H1 (cell line): ENCODE measurements at regions of chr22 and their contacts with region 1.

Region 1: GRCh38 chr22:39343259-39344048 is 6.3 kb upstream of the SYNGR1 start:
- DNase-seq: peak; percentile 34 to 76
- H3K4me3 ChIP-seq: peak overlapping the region in 1 of 4 experiments; percentile 3; a peak in 1 of 8 replicates
- H3K27ac ChIP-seq: no peak overlapping the region
- H3K4me1 ChIP-seq: peaks cover 2 to 3% (median 3%) of the 10 kb centered on the region in 4 experiments; a peak in 4 of 7 replicates
- H3K27me3 ChIP-seq: no peaks in the 10 kb centered on the region
- CTCF ChIP-seq: peak; percentile 74 to 94 (median 75)
- EP300 ChIP-seq: no peak
- POLR2A ChIP-seq: no peak
- RAD21 ChIP-seq: peak; percentile 63 to 74

Region 2: GRCh38 chr22:39144101-39144767 is 199.2 kb before region 1 on chr22:
- CTCF ChIA-PET with region 1: no interaction called
- POLR2A ChIA-PET with region 1: no interaction called
- DNase-seq: no peak
- H3K4me3 ChIP-seq: peak overlapping the region; percentile 87 to 99 (median 92); a peak in 6 of 8 replicates
- H3K27ac ChIP-seq: no peak overlapping the region
- H3K4me1 ChIP-seq: peaks cover 12 to 24% (median 19%) of the 10 kb centered on the region in 4 experiments
- H3K27me3 ChIP-seq: no peaks in the 10 kb centered on the region; a peak in 1 of 7 replicates
- CTCF ChIP-seq: no peak
- EP300 ChIP-seq: no peak
- POLR2A ChIP-seq: no peak
- RAD21 ChIP-seq: no peak

Region 3: GRCh38 chr22:39292561-39293098 is 50.8 kb before region 1 on chr22:
- CTCF ChIA-PET with region 1: no interaction called
- POLR2A ChIA-PET with region 1: no interaction called
- DNase-seq: peak in 1 of 2 experiments; percentile 62
- H3K4me3 ChIP-seq: no peak overlapping the region
- H3K27ac ChIP-seq: no peak overlapping the region
- H3K4me1 ChIP-seq: peaks cover 0 to 16% (median 7%) of the 10 kb centered on the region in 4 experiments; a peak in 6 of 7 replicates
- H3K27me3 ChIP-seq: no peaks in the 10 kb centered on the region; a peak in 1 of 7 replicates
- CTCF ChIP-seq: no peak
- EP300 ChIP-seq: no peak
- POLR2A ChIP-seq: no peak
- RAD21 ChIP-seq: no peak

Region 4: DNA sequence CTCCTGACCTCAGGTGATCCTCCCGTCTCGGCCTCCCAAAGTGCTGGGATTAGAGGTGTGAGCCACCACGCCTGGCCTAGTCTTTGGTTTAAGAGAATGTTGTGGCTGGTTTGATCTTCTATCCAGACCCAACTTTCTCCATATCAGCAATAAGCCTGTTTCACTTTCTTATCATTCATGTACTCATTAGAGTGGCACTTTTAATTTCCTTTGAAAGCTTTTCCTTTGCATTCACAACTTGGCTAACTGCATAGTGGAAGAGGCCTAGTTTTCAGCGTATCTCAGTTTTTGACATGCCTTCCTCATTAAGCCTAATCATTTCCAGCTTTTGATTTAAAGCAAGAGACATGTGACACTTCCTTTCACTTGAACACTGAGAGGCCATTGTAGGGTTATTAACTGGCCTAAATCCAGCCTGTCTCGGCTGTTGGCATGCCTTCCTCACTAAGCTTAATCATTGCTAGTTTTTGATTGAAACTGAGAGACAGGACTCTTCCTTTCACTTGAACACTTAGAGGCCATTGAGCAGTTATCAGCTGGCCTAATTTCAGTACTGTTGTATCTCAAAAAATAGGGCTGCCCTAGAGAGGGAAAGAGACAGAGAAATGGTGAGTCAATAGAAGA is 10.9 kb before region 1 on chr22:
- CTCF ChIA-PET with region 1: interaction called, 110 read pairs
- POLR2A ChIA-PET with region 1: interaction called, 4 read pairs
- DNase-seq: no peak
- H3K4me3 ChIP-seq: no peak overlapping the region
- H3K27ac ChIP-seq: no peak overlapping the region
- H3K4me1 ChIP-seq: no peaks in the 10 kb centered on the region
- H3K27me3 ChIP-seq: no peaks in the 10 kb centered on the region
- CTCF ChIP-seq: no peak
- EP300 ChIP-seq: no peak
- POLR2A ChIP-seq: no peak
- RAD21 ChIP-seq: no peak

Region 5: GRCh38 chr22:39364714-39365491 is 21.4 kb after region 1 on chr22:
- CTCF ChIA-PET with region 1: interaction called, 18 read pairs
- POLR2A ChIA-PET with region 1: interaction called, 3 read pairs
- DNase-seq: no peak
- H3K4me3 ChIP-seq: no peak overlapping the region
- H3K27ac ChIP-seq: no peak overlapping the region
- H3K4me1 ChIP-seq: peaks cover 4 to 40% (median 25%) of the 10 kb centered on the region in 4 experiments
- H3K27me3 ChIP-seq: 0 out of 7 replicates have a peak, but pooled peaks cover 0 to 2% (median 0%) of the 10 kb centered on the region in 4 experiments
- CTCF ChIP-seq: no peak
- EP300 ChIP-seq: no peak
- POLR2A ChIP-seq: no peak
- RAD21 ChIP-seq: no peak

Region 6: DNA sequence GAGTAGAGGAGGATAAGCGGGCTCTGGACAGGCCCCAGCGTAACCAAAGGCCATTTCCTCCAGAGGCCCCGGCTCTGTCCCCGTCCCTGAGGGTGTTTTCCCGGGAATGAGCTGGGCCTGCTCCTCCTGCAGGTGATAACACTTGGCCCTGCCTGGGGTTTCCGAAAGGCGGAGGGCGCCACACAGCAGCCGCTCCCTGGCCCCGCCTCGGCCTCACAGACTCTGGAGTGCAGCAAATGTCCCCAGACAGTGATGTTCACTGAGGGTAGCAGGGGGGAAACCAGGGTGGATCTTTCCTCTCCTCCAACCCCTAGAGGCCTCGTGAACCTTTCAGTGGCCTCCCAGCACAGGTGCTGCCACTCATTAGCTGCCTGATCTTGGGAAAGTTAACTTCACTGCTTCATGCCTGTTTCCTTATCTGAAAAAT is 102.9 kb after region 1 on chr22:
- CTCF ChIA-PET with region 1: interaction called, 13 read pairs
- POLR2A ChIA-PET with region 1: no interaction called
- DNase-seq: peak in 1 of 2 experiments; percentile 69
- H3K4me3 ChIP-seq: no peak overlapping the region
- H3K27ac ChIP-seq: no peak overlapping the region
- H3K4me1 ChIP-seq: peaks cover 0 to 8% (median 6%) of the 10 kb centered on the region in 4 experiments; a peak in 6 of 7 replicates
- H3K27me3 ChIP-seq: no peaks in the 10 kb centered on the region; a peak in 2 of 7 replicates
- CTCF ChIP-seq: peak in 2 of 3 experiments; percentile 14 to 30; a peak in 3 of 4 replicates
- EP300 ChIP-seq: no peak
- POLR2A ChIP-seq: no peak
- RAD21 ChIP-seq: peak in 1 of 2 experiments; percentile 26; a peak in 2 of 4 replicates